ENCODE measurements at regions of chr9 and their contacts with region 1.

Region 1: DNA sequence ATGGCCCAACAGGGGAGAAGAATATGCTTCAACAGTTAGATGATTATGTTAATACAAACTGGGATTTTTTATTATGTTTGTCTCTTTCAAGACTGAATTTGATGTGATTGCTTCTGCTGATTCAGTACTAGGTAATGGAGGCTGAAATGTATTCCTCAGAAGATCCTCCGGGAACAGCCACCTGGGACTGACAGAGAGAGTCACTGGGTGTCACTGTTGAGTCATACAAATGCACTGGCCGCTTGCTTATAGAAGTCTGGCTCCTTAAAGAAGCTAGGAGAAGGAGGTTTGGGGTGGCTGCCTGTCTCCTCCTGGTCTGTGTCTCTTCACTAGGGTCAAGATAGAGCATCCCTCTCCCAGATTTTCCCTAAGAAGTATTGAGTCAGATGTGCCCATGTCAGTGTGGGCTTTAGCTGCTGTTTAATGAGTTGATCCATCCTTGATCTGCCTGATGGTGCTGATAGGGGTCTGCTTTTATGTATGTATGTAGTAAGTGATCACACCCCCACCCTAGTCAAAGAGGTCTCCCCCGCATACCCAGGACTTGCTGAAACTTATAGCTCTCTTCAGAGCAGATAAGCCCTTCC is 773.4 kb downstream of the BRINP1 start:
- DNase-seq: peak; percentile 25
- ATAC-seq: peak in 1 of 2 donors; percentile 53

Region 2: DNA sequence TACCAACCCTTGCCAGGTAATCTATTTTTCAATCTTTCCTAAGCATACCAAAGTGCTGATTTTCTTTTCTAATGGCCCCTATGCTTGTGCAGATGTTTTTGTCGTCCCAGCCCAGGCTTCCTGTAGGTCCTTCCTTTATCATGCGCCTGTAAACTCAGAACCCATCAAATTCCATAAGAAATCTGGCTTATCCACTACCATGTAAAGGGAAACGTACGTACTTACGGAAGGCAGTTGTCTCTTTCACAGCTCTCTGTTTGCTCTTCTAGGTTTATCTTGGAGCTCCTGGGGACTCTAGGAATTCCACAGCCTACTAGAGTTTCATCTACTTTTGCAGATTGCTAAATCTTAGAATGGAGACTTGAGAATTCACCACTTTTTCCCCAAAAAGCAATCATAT is 764.4 kb after region 1 on chr9:
- intact Hi-C with region 1: loop called in 1 of 2 experiments (anchors 5 kb)
- DNase-seq: no peak
- ATAC-seq: no peak

Measured in left cardiac atrium (tissue), 4 donors.